Dendritic cell treated with granulocyte-macrophage colony-stimulating factor and Interleukin-4, amounts not matched to agents 40 ng/mL and 50 ng/mL, for 4 days (primary cell): ENCODE measurements at regions of chr16 and their contacts with region 1.

Region 1: DNA sequence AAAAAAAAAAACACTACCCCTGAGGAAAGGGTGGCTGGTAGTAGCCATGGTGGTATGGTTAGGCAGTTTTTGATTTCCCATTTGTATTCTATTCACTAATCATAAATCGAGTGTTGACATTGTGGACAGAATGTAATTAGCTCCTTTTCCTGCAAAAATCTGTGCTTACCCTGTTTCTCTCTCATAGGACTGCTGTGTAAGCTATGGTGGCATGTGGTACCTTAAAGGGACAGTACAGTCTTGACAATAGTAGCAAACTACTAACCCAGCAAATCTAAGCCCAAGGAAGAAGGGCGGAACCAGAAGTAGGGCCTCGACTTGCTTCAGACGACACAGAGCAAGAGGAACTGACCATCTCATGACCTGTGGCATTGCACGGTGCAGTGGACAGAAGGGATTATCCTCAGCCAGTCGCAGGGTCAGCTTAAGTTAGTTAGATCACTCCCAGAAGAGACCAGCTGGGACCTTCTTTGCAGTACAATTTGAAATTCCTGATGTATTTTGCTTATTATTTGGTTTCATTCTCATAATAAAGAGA is 36.3 kb downstream of the POLR3E start:
- H3K4me3 Mint-ChIP-seq: no peak overlapping the region
- H3K27ac Mint-ChIP-seq: peak overlapping the region; percentile 43
- H3K4me1 Mint-ChIP-seq: peaks cover 56% of the 10 kb centered on the region
- H3K27me3 Mint-ChIP-seq: no peaks in the 10 kb centered on the region

Region 2: DNA sequence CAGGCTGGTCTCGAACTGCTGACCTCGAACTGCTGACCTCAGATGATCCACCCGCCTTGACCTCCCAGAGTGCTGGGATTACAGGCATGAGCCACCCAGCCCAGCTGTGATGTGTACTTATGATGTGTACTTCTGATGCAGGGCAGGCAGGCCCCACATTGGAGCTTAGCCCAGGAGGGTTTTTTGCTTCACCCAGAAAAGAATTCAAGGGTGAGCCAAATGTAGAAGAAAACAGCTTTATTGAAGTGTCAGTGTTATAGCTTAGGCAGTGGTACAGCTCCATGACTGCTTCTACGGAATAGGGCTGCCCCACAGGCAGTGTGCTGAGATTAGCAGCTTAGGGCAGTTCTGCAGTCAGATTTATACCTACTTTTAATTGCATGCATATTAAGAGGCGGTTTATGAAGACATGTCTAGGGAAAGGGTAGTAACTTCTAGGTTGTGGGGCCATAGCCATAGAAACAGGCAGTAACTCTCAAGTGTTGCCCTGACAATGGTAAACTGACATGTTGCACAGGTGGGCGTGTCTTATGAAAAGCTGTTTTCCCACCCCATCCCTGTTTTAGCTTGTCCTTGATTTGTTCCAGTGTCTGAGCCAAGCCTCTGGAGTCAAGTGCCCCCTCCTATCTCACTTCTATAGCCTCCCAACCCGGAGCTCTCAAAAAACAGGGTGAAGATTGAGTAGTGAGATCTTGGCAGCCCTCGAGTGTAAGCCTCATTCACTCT is 60.5 kb before region 1 on chr16:
- intact Hi-C with region 1: no loop called
- H3K4me3 Mint-ChIP-seq: no peak overlapping the region
- H3K27ac Mint-ChIP-seq: no peak overlapping the region
- H3K4me1 Mint-ChIP-seq: no peaks in the 10 kb centered on the region
- H3K27me3 Mint-ChIP-seq: no peaks in the 10 kb centered on the region

Region 3: DNA sequence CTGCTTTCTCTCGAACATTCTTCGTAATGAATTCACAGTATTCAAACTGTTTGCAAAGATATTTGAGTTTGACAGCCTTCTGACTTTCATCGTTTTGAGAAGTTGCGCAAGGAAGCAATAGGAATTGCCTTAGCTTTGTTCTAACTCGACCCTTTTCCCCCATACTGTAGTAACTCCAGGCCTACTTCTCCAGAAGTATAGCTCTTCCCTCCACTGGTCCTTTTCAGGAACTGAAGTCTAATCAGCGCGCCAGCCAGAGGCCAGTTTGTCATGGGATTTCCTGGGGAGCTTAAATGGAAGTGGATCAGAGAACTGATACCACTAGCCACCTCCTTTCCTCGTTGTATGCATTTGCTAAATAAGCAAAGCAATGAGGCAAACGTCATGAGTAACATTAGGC is 13.0 kb after region 1 on chr16:
- intact Hi-C with region 1: loop called (anchors 2 kb)
- H3K4me3 Mint-ChIP-seq: peak overlapping the region; percentile 17
- H3K27ac Mint-ChIP-seq: peak overlapping the region; percentile 92
- H3K4me1 Mint-ChIP-seq: peaks cover 65% of the 10 kb centered on the region
- H3K27me3 Mint-ChIP-seq: no peaks in the 10 kb centered on the region